Sciatic nerve (tissue), 2 donors: ENCODE measurements at regions of chr15 and their contacts with region 1.

Region 1: GRCh38 chr15:92714477-92715401 is 59.2 kb upstream of the FAM174B start:
- DNase-seq: peak; percentile 89
- ATAC-seq: peak; percentile 95

Region 2: GRCh38 chr15:92521624-92522008 is 193.1 kb before region 1 on chr15:
- intact Hi-C with region 1: loop called (anchors 5 kb)
- DNase-seq: peak; percentile 91
- ATAC-seq: peak; percentile 94

Region 3: GRCh38 chr15:92665100-92665555 is 49.6 kb before region 1 on chr15:
- intact Hi-C with region 1: no loop called
- DNase-seq: no peak
- ATAC-seq: peak; percentile 69